ENCODE measurements at regions of chr16 and their contacts with region 1.

Region 1: DNA sequence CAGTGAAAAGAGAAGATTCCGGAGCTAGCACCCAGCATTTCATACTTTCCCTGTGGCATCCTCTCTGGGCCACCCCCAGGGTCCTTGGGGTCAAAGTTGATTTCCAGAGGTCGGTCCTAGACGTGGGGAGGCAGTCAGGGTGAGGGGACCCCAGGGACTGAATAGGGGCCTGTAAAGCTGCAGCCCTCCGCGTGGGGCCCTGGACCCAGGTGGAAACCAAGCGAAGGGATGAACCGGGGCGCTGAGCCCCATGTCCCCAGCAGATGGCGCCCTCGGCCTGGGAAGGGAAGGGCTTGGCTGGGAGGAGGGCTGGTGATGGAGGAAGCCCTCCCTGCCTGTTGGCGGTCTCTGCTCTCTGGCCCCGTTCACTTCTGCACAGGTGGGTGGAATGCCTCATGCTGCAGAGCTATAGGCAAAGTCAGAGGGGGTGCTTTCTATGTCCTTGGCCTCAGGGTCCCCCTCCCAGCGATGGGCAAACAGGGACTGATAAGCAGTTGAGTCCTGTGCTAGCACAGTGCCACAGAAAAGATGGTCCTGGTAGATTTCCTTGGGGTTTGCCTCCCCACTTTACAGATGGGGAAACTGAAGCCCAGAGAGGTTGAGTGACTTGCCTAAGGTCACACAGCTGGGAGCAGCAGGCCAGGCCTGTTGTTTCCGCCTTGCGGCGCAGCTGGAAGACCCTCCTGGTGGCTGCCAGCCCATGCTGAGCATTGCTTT is 163.4 kb upstream of the CIBAR2 start:
- DNase-seq: peak; percentile 73 to 97 (median 86)

Region 2: DNA sequence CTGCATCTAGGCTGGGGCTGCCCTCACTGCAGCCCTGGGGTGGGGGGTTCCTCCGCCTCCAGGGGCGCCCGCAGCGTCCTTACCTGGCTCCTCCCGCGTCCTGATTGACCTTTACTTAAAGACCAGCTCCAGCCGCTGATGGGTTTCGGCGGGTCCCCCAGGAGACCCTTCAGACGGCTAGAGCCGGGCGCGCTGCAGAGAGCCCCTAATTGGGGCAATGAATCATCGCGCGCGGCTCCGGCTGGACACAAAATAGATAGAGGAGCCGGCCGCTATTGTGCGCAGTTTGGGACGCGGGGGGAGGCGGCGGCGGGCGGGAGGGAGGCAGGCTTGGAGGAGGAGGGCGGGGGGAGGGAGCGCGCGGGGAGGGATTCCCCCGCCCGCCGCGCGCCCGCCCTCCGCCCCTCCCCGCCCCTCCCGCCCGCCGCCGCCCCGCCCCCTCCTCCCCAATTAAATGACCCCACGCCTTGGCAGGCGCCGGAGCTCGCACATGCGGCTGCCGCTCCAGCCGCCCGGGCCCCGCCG is 106.9 kb before region 1 on chr16:
- intact Hi-C with region 1: no loop called
- DNase-seq: peak in 5 of 10 donors; percentile 26 to 89 (median 78)

Region 3: DNA sequence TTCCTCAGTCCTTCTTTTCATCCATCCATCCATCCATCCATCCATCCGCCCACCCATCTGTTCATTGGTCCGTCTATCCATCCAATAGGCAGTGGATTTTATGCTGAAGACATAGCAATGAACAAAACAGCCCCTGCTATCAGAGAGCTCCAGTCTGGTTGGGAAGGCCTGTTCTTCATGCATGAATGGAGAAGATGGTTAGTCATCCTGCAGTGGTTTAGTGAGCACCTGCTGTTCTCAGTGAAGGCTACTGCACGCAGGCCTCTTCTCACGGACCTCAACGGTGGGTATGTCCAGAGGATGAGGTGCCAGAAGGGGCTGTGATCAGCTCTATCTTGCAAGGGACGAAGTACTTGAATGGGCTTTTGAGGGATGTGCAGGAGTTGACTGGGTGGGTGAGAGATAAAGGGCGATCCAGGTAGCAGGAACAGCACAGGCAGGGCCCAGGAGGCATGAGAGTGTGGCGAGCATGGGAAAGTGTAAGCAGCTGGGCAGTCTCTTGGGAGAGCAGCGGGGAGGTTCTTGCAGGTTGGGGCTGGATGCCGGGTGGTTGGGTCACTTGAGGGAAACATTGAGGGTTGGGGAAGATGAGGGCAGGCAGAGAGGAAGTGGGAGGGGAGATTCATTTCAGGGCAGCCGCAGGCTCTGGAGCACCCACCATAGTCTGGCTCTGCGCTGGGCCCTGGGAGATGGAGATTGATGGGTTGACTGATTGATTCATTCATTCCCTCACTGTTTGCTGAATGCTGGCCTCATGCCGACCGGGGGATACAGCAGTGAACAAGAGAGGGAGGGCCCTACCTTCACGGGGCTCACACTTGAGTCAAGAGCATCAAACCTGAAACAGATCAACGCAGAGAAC is 48.4 kb before region 1 on chr16:
- intact Hi-C with region 1: no loop called
- DNase-seq: no peak

Region 4: GRCh38 chr16:85428168-85428898 is 152.6 kb after region 1 on chr16:
- intact Hi-C with region 1: loop called (anchors 5 kb)
- DNase-seq: peak in 9 of 10 donors; percentile 35 to 93 (median 56)